ENCODE measurements at regions of chr1 and their contacts with region 1.

Region 1: GRCh38 chr1:14441302-14441741 is 157.2 kb upstream of the KAZN start:
- DNase-seq: no peak
- H3K4me3 ChIP-seq: no peak overlapping the region
- CTCF ChIP-seq: no peak
- POLR2A ChIP-seq: no peak

Region 2: GRCh38 chr1:14390816-14391215 is 50.5 kb before region 1 on chr1:
- intact Hi-C with region 1: loop called (anchors 2 kb)
- DNase-seq: no peak
- H3K4me3 ChIP-seq: no peak overlapping the region
- CTCF ChIP-seq: no peak
- POLR2A ChIP-seq: no peak

Region 3: GRCh38 chr1:14498839-14499238 is 57.5 kb after region 1 on chr1:
- intact Hi-C with region 1: no loop called
- DNase-seq: peak in 1 of 2 donors; percentile 14
- H3K4me3 ChIP-seq: no peak overlapping the region
- CTCF ChIP-seq: no peak
- POLR2A ChIP-seq: no peak